Dorsolateral prefrontal cortex (tissue), 120 donors: ENCODE measurements at regions of chr3 and their contacts with region 1.

Region 1: DNA sequence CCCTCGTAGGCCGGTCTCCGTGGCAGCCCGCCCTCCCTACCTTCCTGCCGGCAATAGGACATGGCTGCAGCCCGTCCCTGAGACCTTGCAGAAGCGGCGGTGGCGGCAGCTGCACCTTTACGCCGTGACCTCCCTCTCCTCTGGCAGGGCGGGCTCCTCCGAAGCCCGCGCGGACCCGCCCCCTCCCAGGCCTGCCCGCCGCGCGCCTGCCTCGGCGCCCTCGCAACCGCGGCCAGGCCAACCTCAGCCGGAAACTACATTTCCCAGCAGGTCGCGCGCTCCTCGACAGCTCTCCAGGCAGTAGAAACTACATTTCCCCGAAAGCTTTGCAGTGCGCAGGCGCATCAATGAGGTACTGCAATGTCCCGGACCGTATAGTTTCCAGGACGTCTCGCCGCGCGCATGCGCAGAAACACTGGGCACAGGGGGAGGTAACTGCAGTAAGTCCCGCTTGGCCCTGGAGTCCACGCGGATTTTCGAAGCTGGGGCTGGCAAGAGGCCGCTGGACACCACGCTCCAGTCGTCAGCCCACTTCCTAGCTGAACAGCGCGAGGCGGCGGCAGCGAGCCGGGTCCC is at the starts of genes CHCHD4 and TMEM43:
- DNase-seq: peak; percentile 99 to 100 (median 99)
- H3K4me3 ChIP-seq: peak within 1 kb of the TSS; percentile 70 to 100 (median 95)
- H3K27ac ChIP-seq: peak within 1 kb of the TSS; percentile 39 to 96 (median 89)
- H3K27me3 ChIP-seq: no peaks in the 10 kb centered on the region
- CTCF ChIP-seq: peak in 31 of 56 donors; percentile 7 to 55 (median 24)
- total RNA-seq, gene CHCHD4: 8.5 to 24.0 (median 16.1) TPM
- total RNA-seq, gene TMEM43: 23.1 to 38.3 (median 30.4) TPM

Region 2: GRCh38 chr3:13414040-13414729 is 710.5 kb before region 1 on chr3:
- intact Hi-C with region 1: no loop called
- DNase-seq: peak in 1 of 10 donors; percentile 21
- H3K4me3 ChIP-seq: no peak overlapping the region
- H3K27ac ChIP-seq: peak overlapping the region in 51 of 59 donors; percentile 4 to 86 (median 59)
- H3K27me3 ChIP-seq: no peaks in the 10 kb centered on the region
- CTCF ChIP-seq: no peak

Region 3: GRCh38 chr3:13648060-13649001 is 476.4 kb before region 1 on chr3:
- intact Hi-C with region 1: loop called in 1 of 2 experiments (anchors 10 kb)
- DNase-seq: peak; percentile 79 to 92 (median 88)
- H3K4me3 ChIP-seq: peak overlapping the region in 3 of 59 donors; percentile 18 to 25 (median 24)
- H3K27ac ChIP-seq: peak overlapping the region in 1 of 59 donors; percentile 61
- H3K27me3 ChIP-seq: peaks cover 0 to 5% (median 0%) of the 10 kb centered on the region in 45 donors
- CTCF ChIP-seq: peak; percentile 86 to 100 (median 98)

Region 4: DNA sequence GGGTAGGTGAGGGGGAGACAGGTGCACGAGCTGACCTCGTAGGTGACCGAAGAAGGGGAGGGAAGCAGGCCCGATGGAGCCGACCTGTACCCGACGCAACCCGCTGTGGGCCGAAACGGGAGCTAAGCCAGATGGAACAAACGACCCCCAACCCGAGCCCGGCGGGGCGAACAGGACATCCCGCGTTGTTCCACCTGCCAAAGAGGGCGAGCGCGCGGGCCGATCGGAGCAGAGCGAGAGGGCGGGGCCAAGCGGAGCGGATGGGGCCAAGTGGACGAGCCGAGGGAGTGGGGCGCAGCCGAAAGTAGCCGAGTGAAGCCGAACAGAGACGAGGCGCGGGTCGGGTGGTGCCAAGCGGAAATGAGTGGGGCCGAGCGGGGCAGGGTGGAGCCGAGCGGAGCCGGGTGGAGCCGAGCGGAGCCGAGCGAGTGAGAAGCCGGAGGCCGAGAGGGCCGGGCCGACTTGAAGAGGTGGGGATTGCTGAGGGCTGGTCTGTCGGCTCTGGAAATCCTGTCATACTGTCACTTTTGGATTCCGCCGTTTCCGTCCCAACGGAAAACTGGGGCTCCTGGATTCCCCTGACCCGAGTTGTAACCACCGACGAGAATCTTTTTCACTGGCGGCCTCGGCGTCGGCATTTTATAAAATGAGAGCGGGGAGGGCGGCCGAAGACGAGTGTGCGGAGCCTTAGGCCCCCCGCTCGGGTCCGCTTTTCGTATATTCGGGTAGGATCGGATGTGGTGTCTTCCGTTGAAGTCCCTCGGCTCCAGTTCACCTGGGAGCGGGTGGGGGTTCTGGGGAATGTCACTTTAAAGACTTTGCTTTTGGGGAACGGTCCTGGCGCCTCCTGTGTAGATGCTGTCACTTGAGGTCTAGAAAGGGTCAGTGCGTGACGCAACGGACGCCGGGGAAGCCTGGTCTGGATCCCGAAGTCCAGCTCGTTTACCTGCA is 229.3 kb before region 1 on chr3:
- intact Hi-C with region 1: loop called (anchors 2 to 5 kb)
- DNase-seq: peak; percentile 75 to 96 (median 91)
- H3K4me3 ChIP-seq: peak overlapping the region; percentile 40 to 90 (median 75)
- H3K27ac ChIP-seq: peak overlapping the region in 46 of 59 donors; percentile 9 to 85 (median 46)
- H3K27me3 ChIP-seq: no peaks in the 10 kb centered on the region
- CTCF ChIP-seq: peak in 17 of 56 donors; percentile 8 to 54 (median 21)

Region 5: DNA sequence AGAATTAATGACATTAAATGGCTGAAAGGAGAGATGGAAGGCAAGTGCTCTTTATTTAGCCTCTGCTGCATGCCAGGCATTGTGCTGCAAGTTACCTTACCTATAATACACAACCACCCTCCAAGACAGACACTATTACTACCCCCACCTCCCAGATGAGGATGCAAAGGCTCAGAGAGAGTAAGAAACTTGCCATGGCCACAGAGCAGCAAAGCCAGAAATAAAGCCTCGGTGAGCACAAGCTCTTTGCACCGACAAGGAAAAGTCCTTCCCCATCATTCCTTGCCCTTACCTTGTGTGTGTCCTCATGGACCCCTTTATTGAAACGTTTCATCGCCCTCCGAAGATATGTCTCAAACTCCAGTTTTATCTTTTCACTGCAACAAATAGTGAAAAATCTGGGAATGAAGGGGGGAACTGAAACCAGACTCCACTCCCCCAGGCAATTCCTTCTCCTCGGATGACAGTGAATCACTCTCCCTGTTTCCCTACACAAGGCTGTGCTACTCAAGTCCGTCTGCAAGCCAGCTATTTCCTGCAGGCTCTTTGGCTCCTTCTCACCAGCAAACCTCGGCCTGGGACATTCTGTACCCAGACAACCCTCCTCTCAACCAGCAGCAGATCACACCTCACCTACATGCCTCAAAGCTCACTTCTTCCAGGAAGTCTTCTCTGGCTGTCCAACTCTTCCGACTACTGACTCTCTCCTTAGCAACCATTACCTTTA is 42.3 kb after region 1 on chr3:
- intact Hi-C with region 1: no loop called
- DNase-seq: no peak
- H3K4me3 ChIP-seq: no peak overlapping the region
- H3K27ac ChIP-seq: no peak overlapping the region
- H3K27me3 ChIP-seq: no peaks in the 10 kb centered on the region
- CTCF ChIP-seq: no peak

Region 6: GRCh38 chr3:14178247-14179113 is 53.8 kb after region 1 on chr3 and contains the starts of genes LSM3 and XPC:
- intact Hi-C with region 1: loop called (anchors 1 kb)
- DNase-seq: peak; percentile 96 to 99 (median 98)
- H3K4me3 ChIP-seq: peak within 1 kb of the TSS; percentile 53 to 99 (median 90)
- H3K27ac ChIP-seq: peak within 1 kb of the TSS; percentile 43 to 98 (median 92)
- H3K27me3 ChIP-seq: no peaks in the 10 kb centered on the region
- CTCF ChIP-seq: peak in 14 of 56 donors; percentile 2 to 53 (median 22)
- total RNA-seq, gene LSM3: 4.4 to 10.8 (median 7.8) TPM
- total RNA-seq, gene XPC: 19.9 to 57.4 (median 32.1) TPM

Region 7: GRCh38 chr3:14640157-14640562 is 515.5 kb after region 1 on chr3:
- intact Hi-C with region 1: loop called in 1 of 2 experiments (anchors 10 kb)
- DNase-seq: peak in 5 of 10 donors; percentile 45 to 62 (median 56)
- H3K4me3 ChIP-seq: peak overlapping the region in 2 of 59 donors; percentile 15 to 24
- H3K27ac ChIP-seq: no peak overlapping the region
- H3K27me3 ChIP-seq: peaks cover 0 to 38% (median 10%) of the 10 kb centered on the region in 45 donors
- CTCF ChIP-seq: no peak

Region 8: DNA sequence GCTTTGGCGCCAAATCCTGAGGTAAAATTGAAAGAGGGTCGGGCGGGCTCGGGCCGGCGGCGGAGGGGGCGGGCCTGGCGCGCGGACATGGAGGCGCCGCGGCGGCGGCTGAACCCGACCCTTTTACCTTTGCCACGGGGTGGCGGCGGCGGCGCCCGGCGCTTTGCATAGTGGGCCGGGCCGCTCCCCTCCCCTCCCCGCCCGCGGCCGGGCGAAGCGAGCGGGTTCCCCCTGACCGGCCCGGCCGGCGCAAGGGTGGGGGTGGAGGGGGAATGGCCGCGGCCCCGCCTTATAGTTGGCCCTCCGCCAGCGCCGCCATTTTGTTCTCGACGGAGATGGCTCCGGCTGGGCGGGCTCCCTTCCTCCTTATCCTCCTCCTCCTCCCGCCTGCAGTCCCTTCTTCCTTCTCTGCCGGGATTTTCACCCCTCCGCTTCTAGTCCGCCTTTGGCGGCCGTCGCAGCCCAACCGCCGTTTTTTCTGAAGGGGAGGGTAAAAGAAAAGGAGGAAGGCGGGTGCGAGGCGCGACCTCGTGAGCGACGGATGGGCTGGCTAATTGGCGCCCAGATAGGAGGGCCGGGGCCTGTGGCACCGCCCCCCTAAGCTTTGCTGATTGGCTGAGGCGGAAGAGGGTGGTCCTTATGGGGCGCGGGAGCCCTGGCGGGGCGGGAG is 823.3 kb after region 1 on chr3:
- intact Hi-C with region 1: loop called (anchors 10 kb)
- DNase-seq: peak; percentile 97 to 99 (median 98)
- H3K4me3 ChIP-seq: peak overlapping the region; percentile 65 to 98 (median 91)
- H3K27ac ChIP-seq: peak overlapping the region; percentile 95 to 100 (median 100)
- H3K27me3 ChIP-seq: no peaks in the 10 kb centered on the region
- CTCF ChIP-seq: peak in 2 of 56 donors; percentile 4 to 13